ENCODE measurements at regions of chr5 and their contacts with region 1.

Region 1: GRCh38 chr5:58460732-58461286 is 923 bp upstream of the PLK2 start:
- DNase-seq: peak; percentile 85
- H3K4me3 ChIP-seq: peak overlapping the region; percentile 94 to 99 (median 98)
- H3K27ac ChIP-seq: peak overlapping the region; percentile 96
- H3K4me1 ChIP-seq: peaks cover 25% of the 10 kb centered on the region
- H3K27me3 ChIP-seq: no peaks in the 10 kb centered on the region
- CTCF ChIP-seq: peak; percentile 72 to 84

Region 2: DNA sequence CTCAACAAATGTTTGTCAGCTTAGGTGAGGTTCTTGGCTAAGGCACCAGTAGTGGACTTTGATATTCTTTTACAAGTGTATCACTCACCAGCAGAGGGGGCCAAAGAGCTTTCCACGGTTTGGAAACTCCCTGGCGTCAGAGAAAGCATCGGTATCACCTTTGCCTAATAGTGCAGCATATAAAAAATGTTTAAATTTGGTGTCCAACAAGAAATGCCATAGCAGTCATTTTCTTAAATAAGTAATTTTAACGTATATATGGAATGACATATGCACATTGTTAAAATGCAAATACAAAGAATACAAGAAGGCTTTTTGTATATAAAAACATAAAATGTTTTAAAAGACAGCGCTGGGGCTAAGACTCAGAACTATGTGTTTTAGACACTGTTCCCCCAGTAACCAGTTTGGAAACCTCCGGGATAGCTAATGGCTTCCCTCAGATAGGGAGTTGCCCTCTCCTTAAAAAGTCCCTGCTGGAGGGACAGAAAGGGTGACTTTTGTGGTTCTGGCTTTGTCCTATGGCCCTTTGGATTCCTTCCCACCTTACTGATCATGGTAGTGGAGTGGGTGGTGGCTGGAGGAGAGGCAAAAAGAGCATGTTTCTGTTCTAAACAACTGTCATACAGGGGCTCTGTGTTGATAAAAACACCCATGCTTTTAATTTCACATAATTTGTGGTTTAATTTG is 1162.4 kb before region 1 on chr5:
- CTCF ChIA-PET with region 1: no interaction called
- dilution Hi-C with region 1: no loop called
- in situ Hi-C with region 1: loop called (anchors 5 to 10 kb)
- intact Hi-C with region 1: loop called (anchors 1 kb)
- DNase-seq: peak; percentile 73
- H3K4me3 ChIP-seq: no peak overlapping the region
- H3K27ac ChIP-seq: no peak overlapping the region
- H3K4me1 ChIP-seq: no peaks in the 10 kb centered on the region
- H3K27me3 ChIP-seq: no peaks in the 10 kb centered on the region
- CTCF ChIP-seq: peak; percentile 76 to 88

Region 3: DNA sequence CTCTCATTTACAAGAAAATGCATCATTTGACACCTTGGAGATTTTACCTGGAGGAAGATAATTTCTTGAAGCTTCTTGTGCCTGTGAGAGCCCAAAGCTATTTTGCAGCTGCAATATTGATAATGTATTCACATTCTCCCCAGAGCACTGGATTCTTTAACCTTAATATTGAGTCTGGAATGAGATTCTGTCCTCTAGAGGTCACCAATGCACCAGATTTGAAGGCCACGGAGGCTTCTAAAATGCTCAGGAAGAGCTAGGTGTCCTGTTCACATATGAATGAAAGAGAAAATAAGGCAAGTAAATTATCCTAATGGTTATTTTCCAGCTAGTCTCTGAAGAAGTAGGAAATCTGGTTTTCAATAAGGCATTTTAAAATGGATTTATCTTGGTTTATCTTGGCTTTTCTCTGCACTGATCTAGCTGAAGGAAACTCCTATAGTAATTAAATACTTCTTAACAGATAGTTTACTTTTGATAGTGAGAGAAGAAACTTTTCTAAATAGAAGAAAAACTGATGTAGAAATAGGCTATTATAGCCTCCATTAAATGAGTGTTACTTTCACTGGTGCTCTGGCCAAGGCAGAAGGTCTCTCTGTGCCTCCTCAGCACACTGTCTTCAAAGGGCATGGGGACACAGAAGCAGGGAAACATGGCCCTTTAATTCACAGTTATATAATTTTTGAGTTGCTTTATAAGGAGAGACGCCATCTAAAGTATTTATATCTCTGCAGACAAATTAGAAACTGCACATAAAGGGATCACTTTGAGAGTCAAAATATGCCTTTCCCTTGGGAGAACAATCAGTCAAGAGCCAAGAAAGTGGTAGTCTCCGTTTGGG is 681.2 kb before region 1 on chr5:
- CTCF ChIA-PET with region 1: interaction called, 14 read pairs
- dilution Hi-C with region 1: no loop called
- in situ Hi-C with region 1: loop called in 1 of 2 experiments (anchors 5 kb)
- intact Hi-C with region 1: loop called (anchors 1 kb)
- DNase-seq: peak; percentile 69
- H3K4me3 ChIP-seq: no peak overlapping the region
- H3K27ac ChIP-seq: no peak overlapping the region
- H3K4me1 ChIP-seq: peaks cover 17% of the 10 kb centered on the region
- H3K27me3 ChIP-seq: no peaks in the 10 kb centered on the region
- CTCF ChIP-seq: peak; percentile 56 to 68

Region 4: DNA sequence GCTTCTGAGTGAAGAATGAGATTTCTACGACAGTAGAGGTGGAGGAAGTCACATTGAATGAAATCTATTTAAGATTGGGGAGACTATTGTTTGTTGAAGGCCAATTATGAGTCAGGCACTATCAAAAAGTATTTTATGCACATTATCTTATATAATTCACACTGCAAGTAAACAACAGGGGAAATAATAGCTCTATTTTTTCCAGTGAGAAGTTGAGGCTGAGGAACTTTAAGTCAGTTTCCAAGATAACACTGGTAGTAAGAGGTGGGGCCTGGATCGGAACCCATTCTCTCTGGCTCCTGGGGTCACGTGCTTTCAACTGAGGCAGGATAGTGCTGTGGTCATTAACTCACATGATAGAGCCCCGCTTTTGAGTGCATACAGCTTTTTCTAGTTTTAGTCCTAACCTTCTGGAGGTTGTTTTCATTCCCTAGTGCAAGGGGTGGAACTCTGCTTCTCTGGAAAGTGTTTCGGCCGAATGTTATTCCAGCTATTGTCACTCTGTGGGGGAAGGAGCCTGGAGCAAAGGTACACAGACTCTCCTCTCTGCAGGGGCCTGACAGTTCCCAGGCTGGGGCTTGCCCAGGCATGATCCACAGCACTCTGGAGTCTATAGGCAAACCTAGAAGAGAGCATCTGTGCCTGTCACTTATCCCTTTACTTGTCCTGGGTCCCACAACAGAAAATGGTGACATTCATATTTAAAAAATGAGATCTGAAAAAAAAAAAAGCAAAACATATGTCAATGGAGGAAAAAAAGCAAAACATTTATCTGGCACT is 625.8 kb before region 1 on chr5:
- CTCF ChIA-PET with region 1: interaction called, 9 read pairs
- dilution Hi-C with region 1: no loop called
- in situ Hi-C with region 1: no loop called
- intact Hi-C with region 1: loop called (anchors 1 kb)
- DNase-seq: peak; percentile 90
- H3K4me3 ChIP-seq: no peak overlapping the region
- H3K27ac ChIP-seq: peak overlapping the region; percentile 99
- H3K4me1 ChIP-seq: peaks cover 74% of the 10 kb centered on the region
- H3K27me3 ChIP-seq: no peaks in the 10 kb centered on the region
- CTCF ChIP-seq: no peak

Region 5: DNA sequence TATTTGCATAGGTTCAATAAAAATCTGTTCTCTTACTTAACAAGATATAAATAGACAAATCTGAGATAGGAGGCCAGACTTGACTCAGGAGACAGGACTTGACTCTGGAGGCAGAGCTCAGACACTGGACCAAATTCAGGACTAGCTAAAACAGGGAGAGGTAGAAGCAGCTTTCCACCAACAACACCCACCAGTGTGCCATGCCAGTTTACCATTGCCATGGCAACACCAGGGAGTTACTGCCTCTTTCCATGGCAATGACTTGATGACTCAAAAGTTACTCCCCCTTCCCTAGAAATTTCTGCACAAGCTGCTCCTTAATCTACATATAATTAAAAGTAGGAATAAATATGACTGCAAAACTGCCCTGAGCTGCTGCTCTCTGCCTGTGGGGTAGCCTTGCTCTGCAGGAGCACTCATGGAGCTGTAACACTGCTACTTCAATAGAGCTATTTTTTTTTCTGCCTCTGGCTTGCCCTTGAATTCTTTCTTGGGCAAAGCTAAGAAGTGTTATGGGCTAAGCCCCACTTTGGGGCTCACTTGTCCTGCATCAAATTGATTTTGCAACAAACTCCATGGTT is 474.0 kb before region 1 on chr5:
- CTCF ChIA-PET with region 1: no interaction called
- dilution Hi-C with region 1: no loop called
- in situ Hi-C with region 1: no loop called
- intact Hi-C with region 1: loop called (anchors 5 kb)
- DNase-seq: peak; percentile 63
- H3K4me3 ChIP-seq: no peak overlapping the region
- H3K27ac ChIP-seq: no peak overlapping the region
- H3K4me1 ChIP-seq: peaks cover 11% of the 10 kb centered on the region
- H3K27me3 ChIP-seq: no peaks in the 10 kb centered on the region
- CTCF ChIP-seq: no peak

Region 6: DNA sequence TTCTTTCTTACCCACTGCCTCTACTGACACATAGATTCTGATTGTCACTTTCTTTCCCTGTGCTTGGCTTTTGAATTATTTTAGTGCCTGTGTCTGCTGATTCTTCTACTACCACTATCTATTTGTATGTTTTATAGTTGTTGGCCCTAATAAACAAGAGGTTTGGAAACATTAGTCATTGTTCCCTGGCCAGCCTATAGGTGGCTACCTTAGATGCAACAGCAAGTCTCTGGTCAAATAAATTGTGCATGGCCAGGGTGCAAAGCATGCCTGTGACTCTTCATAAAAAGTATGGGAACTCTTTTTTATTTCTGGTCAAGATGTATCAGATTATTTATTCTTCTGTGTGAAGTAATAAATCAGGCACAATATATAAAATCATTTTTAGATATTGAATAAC is 125.3 kb before region 1 on chr5:
- CTCF ChIA-PET with region 1: no interaction called
- dilution Hi-C with region 1: no loop called
- in situ Hi-C with region 1: no loop called
- intact Hi-C with region 1: loop called (anchors 2 kb)
- DNase-seq: peak; percentile 26
- H3K4me3 ChIP-seq: no peak overlapping the region
- H3K27ac ChIP-seq: no peak overlapping the region
- H3K4me1 ChIP-seq: peaks cover 9% of the 10 kb centered on the region
- H3K27me3 ChIP-seq: no peaks in the 10 kb centered on the region
- CTCF ChIP-seq: peak in 1 of 2 donors; percentile 59

Region 7: DNA sequence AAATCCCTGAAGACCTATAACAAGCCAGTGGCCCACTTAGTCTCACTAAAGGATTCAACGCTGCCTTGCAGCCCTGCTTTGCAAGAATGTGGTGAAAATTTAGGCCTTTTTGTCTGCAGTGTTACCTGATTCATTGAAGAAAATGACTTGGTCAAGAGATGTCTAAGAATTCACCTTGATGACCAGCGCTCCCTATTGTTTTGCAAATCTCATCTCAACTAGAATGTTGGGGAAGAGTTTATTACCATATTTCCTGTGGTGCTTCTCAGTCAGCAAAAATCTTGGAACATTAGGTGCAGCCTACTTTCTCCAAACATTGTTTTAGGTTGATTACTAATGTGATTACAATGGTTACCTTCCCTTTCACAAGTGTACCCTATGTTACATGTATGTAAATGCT is 54.4 kb before region 1 on chr5:
- CTCF ChIA-PET with region 1: no interaction called
- dilution Hi-C with region 1: no loop called
- in situ Hi-C with region 1: no loop called
- intact Hi-C with region 1: no loop called
- DNase-seq: no peak
- H3K4me3 ChIP-seq: no peak overlapping the region
- H3K27ac ChIP-seq: peak overlapping the region; percentile 76
- H3K4me1 ChIP-seq: peaks cover 59% of the 10 kb centered on the region
- H3K27me3 ChIP-seq: no peaks in the 10 kb centered on the region
- CTCF ChIP-seq: no peak

Region 8: GRCh38 chr5:58666598-58667581 is 206.1 kb after region 1 on chr5:
- CTCF ChIA-PET with region 1: no interaction called
- dilution Hi-C with region 1: no loop called
- in situ Hi-C with region 1: no loop called
- intact Hi-C with region 1: no loop called
- DNase-seq: no peak
- H3K4me3 ChIP-seq: no peak overlapping the region
- H3K27ac ChIP-seq: no peak overlapping the region
- H3K4me1 ChIP-seq: no peaks in the 10 kb centered on the region
- H3K27me3 ChIP-seq: no peaks in the 10 kb centered on the region
- CTCF ChIP-seq: no peak

Measured in mammary epithelial cell (primary cell).